Naive thymus-derived CD4-positive, alpha-beta T cell (primary cell): ENCODE measurements at regions of chr10 and their contacts with region 1.

Region 1: DNA sequence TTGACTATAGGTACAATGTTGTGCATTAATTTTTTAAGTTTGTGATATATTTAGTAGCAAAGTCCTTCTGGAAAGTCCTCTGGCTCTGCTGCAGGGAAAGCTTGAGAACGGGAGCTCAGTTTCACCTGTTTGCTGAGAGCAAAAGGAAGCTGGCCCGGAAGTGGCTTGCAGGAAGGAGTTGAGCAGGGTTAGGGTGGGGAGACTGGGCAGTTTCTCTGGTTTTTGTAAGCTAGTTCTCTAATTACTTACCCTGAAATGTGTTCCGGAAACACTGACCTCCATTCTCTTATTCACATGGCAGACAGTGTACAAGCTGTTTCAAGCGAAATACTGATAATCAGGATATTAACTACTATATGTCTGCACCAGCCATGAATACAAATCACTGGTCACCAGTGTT is 22.3 kb downstream of the MAP3K8 start:
- DNase-seq: peak in 5 of 9 donors; percentile 11 to 22 (median 16)
- ATAC-seq: peak; percentile 74
- H3K4me3 ChIP-seq: peak overlapping the region; percentile 17
- H3K4me3 Mint-ChIP-seq: peak overlapping the region; percentile 58 to 78 (median 72)
- H3K27ac ChIP-seq: no peak overlapping the region
- H3K27ac Mint-ChIP-seq: peak overlapping the region; percentile 11 to 85 (median 53)
- H3K4me1 ChIP-seq: peaks cover 18 to 26% of the 10 kb centered on the region in 2 donors
- H3K4me1 Mint-ChIP-seq: peaks cover 17 to 35% (median 20%) of the 10 kb centered on the region in 7 donors
- H3K27me3 ChIP-seq: no peaks in the 10 kb centered on the region
- H3K27me3 Mint-ChIP-seq: no peaks in the 10 kb centered on the region

Region 2: GRCh38 chr10:30309401-30309800 is 146.9 kb before region 1 on chr10:
- CTCF ChIA-PET with region 1: no interaction called
- POLR2A ChIA-PET with region 1: no interaction called
- intact Hi-C with region 1: no loop called
- DNase-seq: no peak
- ATAC-seq: no peak
- H3K4me3 ChIP-seq: no peak overlapping the region
- H3K4me3 Mint-ChIP-seq: no peak overlapping the region
- H3K27ac ChIP-seq: no peak overlapping the region
- H3K27ac Mint-ChIP-seq: no peak overlapping the region
- H3K4me1 ChIP-seq: no peaks in the 10 kb centered on the region
- H3K4me1 Mint-ChIP-seq: peaks cover 0 to 3% (median 0%) of the 10 kb centered on the region in 7 donors
- H3K27me3 ChIP-seq: no peaks in the 10 kb centered on the region
- H3K27me3 Mint-ChIP-seq: no peaks in the 10 kb centered on the region

Region 3: DNA sequence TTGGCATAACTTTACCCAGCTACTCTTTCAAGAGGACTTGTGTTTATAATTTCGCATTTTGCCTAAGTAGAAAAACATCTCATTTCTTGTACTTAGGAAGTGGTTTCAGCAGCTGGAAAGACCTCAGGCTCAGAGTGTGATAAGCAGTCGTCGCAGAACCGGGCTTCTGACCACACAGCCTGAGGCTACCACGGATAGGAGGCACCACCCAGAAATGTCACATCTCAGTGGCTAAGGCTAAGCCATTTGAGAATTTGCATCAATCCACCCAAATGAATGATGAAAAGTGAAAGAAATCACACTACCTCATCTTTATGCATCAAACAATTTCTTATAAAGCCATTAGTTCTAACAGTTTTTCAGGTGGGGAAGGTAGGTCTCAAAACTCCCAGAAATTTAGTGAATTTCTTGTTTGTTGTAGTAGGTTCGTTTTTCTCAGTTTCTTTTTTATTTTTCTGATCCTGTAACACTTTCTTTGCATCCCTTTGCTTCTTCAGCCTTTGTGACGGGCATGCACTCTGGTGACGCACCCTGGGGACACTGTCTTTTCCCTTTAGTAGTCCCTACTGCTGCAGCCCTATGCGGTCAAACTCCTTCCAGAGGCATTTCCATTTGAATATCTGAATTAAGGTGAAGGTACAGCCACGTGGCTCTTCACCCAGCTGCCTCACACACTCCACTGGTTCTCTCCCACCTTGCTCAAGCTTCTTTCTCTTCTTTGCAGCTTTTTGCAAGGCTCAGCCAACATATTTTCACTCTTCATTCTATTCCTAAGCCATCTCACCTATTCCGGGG is 46.2 kb after region 1 on chr10:
- CTCF ChIA-PET with region 1: interaction called, 3 read pairs
- POLR2A ChIA-PET with region 1: no interaction called
- intact Hi-C with region 1: loop called in 1 of 2 experiments (anchors 5 kb)
- DNase-seq: peak in 1 of 9 donors; percentile 38
- ATAC-seq: peak; percentile 87
- H3K4me3 ChIP-seq: no peak overlapping the region
- H3K4me3 Mint-ChIP-seq: peak overlapping the region in 4 of 10 donors; percentile 25 to 56 (median 36)
- H3K27ac ChIP-seq: no peak overlapping the region
- H3K27ac Mint-ChIP-seq: peak overlapping the region in 3 of 9 donors; percentile 8 to 74 (median 37)
- H3K4me1 ChIP-seq: peaks cover 21 to 48% of the 10 kb centered on the region in 2 donors
- H3K4me1 Mint-ChIP-seq: peaks cover 24 to 85% (median 29%) of the 10 kb centered on the region in 7 donors
- H3K27me3 ChIP-seq: no peaks in the 10 kb centered on the region
- H3K27me3 Mint-ChIP-seq: peaks cover 0 to 9% (median 0%) of the 10 kb centered on the region in 5 donors